ENCODE measurements at regions of chr22 and their contacts with region 1.

Region 1: GRCh38 chr22:19730655-19731360 is 7.5 kb downstream of the GP1BB start:
- DNase-seq: peak; percentile 98 to 99 (median 98)
- ATAC-seq: peak; percentile 91
- H3K4me3 ChIP-seq: peak overlapping the region; percentile 45
- H3K27ac ChIP-seq: peak overlapping the region; percentile 6; the same call in 2 of the 3 replicates
- H3K4me1 ChIP-seq: peaks cover 11 to 63% of the 10 kb centered on the region in 2 experiments
- H3K27me3 ChIP-seq: peaks cover 0 to 21% of the 10 kb centered on the region in 2 experiments; a peak in 3 of 5 replicates
- CTCF ChIP-seq: peak; percentile 99 to 100 (median 100)
- EP300 ChIP-seq: peak; percentile 78
- POLR2A ChIP-seq: no peak; the same call in 1 of the 2 replicates
- RAD21 ChIP-seq: peak; percentile 100

Region 2: DNA sequence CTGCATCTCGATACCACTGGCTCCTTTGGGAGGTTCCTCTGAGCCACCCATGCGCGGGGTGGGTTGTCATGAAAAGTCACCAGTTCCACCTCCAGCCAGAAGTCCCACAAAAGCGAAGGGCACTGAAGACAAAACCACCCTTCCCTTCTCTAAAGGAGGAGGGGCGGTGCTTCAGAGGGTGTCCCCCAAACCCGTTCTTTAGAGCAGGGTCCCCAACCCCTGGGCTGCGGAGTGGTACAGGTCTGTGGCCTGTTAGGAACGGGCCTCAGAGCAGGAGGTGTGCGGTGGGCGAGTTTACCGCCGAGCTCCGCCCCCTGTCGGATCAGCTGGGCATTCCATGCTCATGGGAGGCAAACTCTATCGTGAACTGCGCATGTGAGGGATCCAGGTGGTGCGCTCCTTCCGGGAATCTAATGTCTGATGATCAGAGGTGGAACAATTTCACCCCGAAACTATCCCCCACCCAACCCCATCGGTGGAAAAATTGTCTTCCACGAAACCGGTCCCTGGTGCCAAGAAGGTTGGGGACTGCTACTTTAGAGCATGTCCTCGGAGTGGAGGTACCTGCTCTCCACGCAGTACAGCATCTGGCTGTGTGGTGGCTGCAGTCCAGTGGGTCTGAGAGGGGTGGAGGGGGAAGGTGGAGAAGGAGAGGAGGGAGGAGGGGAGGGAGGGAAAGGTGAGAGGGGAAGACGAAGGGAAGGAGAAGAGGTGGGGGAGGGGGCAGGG is 89.4 kb before region 1 on chr22:
- CTCF ChIA-PET with region 1: no interaction called
- POLR2A ChIA-PET with region 1: no interaction called
- in situ Hi-C with region 1: no loop called
- intact Hi-C with region 1: no loop called
- DNase-seq: peak; percentile 92 to 94 (median 92)
- ATAC-seq: peak; percentile 92
- H3K4me3 ChIP-seq: no peak overlapping the region
- H3K27ac ChIP-seq: no peak overlapping the region
- H3K4me1 ChIP-seq: peaks cover 37 to 42% of the 10 kb centered on the region in 2 experiments; a peak in 4 of 5 replicates
- H3K27me3 ChIP-seq: peaks cover 0 to 10% of the 10 kb centered on the region in 2 experiments; a peak in 1 of 5 replicates
- CTCF ChIP-seq: peak; percentile 95 to 99 (median 95)
- EP300 ChIP-seq: peak; percentile 54; the same call in 1 of the 2 replicates
- POLR2A ChIP-seq: no peak
- RAD21 ChIP-seq: peak in 1 of 2 experiments; percentile 77; a peak in 3 of 4 replicates

Region 3: DNA sequence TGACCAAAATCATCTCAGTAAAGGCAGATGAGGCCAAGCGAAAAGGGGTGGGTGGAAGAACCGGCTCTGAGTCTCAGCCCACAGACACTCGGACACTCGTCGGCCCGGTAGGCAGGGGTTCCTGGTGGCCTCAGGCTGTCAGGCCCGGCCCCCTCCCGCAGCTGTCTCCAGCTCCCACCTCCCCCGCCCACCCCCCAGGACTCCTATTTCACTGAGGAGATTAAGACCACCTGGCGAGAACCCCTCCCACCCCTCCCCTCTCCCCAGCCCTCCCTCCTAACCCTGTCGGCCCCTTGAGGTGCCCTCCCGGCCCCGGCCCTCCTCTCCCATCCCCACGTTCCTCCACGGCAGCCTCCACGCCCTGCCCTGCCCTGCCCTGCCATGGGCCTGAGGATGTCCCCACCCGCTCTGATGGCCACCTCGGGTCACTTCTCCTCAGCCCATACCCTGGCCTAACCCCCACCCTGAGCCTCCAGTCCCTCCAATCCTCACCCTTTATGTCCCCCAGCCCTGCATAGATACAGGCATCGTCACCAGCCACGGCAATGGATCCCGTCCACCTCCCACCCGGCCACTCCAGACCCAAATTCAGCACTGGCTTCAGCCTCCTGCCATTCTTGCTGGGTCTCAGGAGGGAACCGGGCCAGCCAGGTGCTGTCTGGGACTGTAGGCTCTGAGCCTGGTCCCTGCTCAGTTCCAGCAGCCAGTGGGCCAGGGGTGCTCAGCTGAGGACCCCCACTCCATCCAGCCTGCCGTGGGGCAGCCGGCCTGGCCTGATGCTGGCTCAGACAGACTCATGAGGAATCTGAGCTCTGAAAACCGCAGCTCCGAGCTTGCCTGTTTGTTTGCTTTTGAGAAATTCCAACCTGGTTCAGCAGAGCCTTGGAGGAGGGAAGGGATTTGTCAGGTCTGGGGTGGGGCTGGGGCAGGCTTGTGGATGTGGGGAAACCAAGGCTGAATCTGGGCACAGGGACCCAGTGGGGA is 20.0 kb after region 1 on chr22:
- CTCF ChIA-PET with region 1: interaction called, 10 read pairs
- POLR2A ChIA-PET with region 1: interaction called, 15 read pairs
- in situ Hi-C with region 1: no loop called
- intact Hi-C with region 1: no loop called
- DNase-seq: no peak
- ATAC-seq: no peak
- H3K4me3 ChIP-seq: no peak overlapping the region
- H3K27ac ChIP-seq: no peak overlapping the region
- H3K4me1 ChIP-seq: peaks cover 5 to 70% of the 10 kb centered on the region in 2 experiments
- H3K27me3 ChIP-seq: peaks cover 56 to 82% of the 10 kb centered on the region in 2 experiments; a peak in 4 of 5 replicates
- CTCF ChIP-seq: no peak
- EP300 ChIP-seq: no peak
- POLR2A ChIP-seq: no peak
- RAD21 ChIP-seq: no peak

Region 4: DNA sequence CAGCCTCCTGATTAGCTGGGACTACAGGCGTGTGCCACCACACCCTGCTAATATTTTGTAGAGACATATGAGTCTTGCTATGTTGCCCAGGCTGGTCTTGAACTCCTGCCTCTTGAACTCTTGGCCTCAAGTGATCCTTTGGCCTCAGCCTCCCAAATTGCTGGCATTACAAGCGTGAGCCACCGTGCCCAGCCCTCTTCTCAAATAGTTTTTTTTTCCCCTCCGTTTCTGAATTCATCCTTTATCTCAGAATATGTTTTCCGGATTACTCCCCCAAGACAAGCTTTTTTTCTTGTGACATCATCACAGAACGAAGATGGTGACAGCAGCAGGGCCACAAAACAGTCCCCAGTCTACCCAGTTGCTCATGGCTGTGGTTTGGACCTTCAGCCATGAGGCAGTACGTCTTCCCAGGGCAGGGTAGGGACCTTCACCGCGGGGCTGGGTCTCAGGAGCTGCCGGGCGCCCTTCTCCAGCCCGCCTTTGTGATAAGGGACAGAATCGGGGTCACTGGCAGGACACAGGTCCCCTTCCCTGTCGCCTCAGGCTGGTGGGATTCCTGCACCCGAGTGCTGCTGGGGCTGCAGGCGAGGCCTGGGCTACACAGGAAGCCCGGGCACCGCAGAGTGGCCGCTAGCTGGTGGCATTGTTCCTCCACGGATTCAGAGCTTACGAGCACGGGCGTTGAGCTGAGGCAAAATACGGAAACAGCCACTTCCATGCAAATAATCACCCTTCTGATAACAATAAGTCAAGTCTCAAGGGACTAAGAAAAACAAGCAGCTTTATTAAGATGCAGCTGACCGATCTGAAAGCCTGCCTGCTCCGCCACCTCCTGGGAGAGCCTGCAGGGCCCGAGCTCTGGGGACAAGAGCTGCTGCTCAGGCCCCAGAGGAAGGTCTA is 41.9 kb after region 1 on chr22:
- CTCF ChIA-PET with region 1: interaction called, 3 read pairs
- POLR2A ChIA-PET with region 1: interaction called, 10 read pairs
- in situ Hi-C with region 1: no loop called
- intact Hi-C with region 1: loop called (anchors 2 kb)
- DNase-seq: peak; percentile 65 to 73 (median 69)
- ATAC-seq: peak; percentile 54
- H3K4me3 ChIP-seq: no peak overlapping the region
- H3K27ac ChIP-seq: peak overlapping the region; percentile 11; the same call in 1 of the 3 replicates
- H3K4me1 ChIP-seq: peaks cover 38 to 77% of the 10 kb centered on the region in 2 experiments
- H3K27me3 ChIP-seq: peaks cover 0 to 9% of the 10 kb centered on the region in 2 experiments; a peak in 2 of 5 replicates
- CTCF ChIP-seq: peak in 2 of 3 experiments; percentile 34 to 37; a peak in 2 of 6 replicates
- EP300 ChIP-seq: no peak
- POLR2A ChIP-seq: no peak
- RAD21 ChIP-seq: peak in 1 of 2 experiments; percentile 51; a peak in 2 of 4 replicates

Region 5: DNA sequence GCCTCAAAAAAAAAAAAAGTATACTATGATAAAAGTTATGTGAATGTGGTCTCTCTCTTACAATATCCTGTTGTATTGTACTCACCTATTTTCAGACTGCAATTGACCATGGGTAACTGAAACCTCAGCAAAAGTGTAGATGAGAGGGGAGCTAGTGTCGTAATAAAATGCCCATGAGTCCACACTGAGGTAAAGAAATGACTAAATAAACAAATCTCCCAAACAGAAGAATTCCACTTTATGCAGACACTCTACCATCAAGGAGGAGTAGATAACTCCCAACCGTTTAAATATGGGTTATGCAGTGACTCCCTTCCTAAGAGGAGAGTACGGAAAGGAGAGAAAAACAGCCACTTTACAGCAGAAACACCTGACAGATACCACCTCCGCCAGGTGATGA is 109.3 kb after region 1 on chr22:
- CTCF ChIA-PET with region 1: no interaction called
- POLR2A ChIA-PET with region 1: no interaction called
- in situ Hi-C with region 1: no loop called
- intact Hi-C with region 1: no loop called
- DNase-seq: no peak
- ATAC-seq: no peak
- H3K4me3 ChIP-seq: no peak overlapping the region
- H3K27ac ChIP-seq: no peak overlapping the region
- H3K4me1 ChIP-seq: peaks cover 0 to 26% of the 10 kb centered on the region in 2 experiments; a peak in 2 of 5 replicates
- H3K27me3 ChIP-seq: no peaks in the 10 kb centered on the region
- CTCF ChIP-seq: no peak
- EP300 ChIP-seq: no peak
- POLR2A ChIP-seq: no peak
- RAD21 ChIP-seq: no peak

Region 6: DNA sequence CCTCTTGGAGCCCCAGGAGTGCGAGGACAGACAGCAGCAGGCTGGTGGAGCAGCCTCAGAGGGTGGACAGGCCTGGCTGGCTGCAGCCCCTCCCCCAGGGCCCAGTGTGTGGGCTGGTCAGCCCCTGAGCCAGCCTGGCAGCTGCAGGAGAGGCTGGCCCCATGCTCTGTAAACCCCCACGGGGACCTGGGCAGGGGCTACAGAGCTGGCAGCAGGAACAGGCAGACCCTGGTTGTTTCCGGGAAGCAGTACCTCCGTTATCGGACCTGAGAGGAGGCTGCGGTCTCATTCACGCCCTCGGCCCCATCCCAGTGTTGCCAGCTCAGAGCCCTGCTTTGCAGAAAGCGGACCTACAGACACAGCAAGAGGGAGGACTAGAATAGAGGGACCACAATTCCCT is 172.2 kb after region 1 on chr22:
- CTCF ChIA-PET with region 1: interaction called, 156 read pairs
- POLR2A ChIA-PET with region 1: interaction called, 5 read pairs
- in situ Hi-C with region 1: no loop called
- intact Hi-C with region 1: loop called (anchors 1 kb)
- DNase-seq: no peak
- ATAC-seq: peak; percentile 29
- H3K4me3 ChIP-seq: no peak overlapping the region
- H3K27ac ChIP-seq: no peak overlapping the region
- H3K4me1 ChIP-seq: peaks cover 0 to 40% of the 10 kb centered on the region in 2 experiments; a peak in 2 of 5 replicates
- H3K27me3 ChIP-seq: no peaks in the 10 kb centered on the region
- CTCF ChIP-seq: no peak
- EP300 ChIP-seq: no peak
- POLR2A ChIP-seq: no peak
- RAD21 ChIP-seq: no peak

Region 7: DNA sequence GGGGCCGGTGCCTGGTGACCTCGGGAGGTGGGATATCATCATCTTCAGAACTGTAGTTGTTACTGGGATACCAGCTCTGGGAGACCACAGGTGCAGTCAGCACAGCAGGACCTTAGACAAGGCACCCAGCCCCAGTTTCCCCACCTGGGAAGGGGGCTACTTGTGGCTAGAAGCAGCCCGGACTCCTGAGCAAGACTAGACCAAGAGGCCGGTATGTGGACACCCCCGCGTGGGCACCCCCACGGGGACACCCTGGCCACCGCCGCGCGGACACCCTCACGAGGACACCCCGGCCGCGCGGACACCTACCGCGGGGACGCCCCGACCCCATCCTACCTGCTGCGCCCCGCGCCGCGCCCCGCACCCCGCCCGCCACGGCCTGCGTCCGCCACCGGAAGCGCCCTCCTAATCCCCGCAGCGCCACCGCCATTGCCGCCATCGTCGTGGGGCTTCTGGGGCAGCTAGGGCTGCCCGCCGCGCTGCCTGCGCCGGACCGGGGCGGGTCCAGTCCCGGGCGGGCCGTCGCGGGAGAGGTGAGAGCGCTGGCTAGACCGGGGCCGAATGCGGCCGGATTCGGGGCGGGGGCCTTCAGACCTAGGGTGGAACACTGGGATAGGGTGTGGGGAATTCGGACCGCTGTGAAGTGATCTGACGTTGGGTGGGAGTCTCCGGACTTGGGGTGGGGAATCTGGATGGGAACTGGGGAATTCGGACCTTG is 210.7 kb after region 1 on chr22 and contains the starts of genes COMT and TXNRD2:
- CTCF ChIA-PET with region 1: interaction called, 3 read pairs
- POLR2A ChIA-PET with region 1: interaction called, 8 read pairs
- in situ Hi-C with region 1: no loop called
- intact Hi-C with region 1: loop called (anchors 2 kb)
- DNase-seq: peak; percentile 96 to 100 (median 100)
- ATAC-seq: peak; percentile 88
- H3K4me3 ChIP-seq: peak within 1 kb of the TSS; percentile 58
- H3K27ac ChIP-seq: peak within 1 kb of the TSS; percentile 88
- H3K4me1 ChIP-seq: peaks cover 35 to 37% of the 10 kb centered on the region in 2 experiments
- H3K27me3 ChIP-seq: no peaks in the 10 kb centered on the region; a peak in 1 of 5 replicates
- CTCF ChIP-seq: peak in 1 of 3 experiments; percentile 34; a peak in 3 of 6 replicates
- EP300 ChIP-seq: peak; percentile 21; the same call in 1 of the 2 replicates
- POLR2A ChIP-seq: no peak
- RAD21 ChIP-seq: no peak
- polyA plus RNA-seq, gene COMT: 12.5 to 39.6 TPM
- polyA plus RNA-seq, gene TXNRD2: 3.3 to 4.4 TPM

Region 8: DNA sequence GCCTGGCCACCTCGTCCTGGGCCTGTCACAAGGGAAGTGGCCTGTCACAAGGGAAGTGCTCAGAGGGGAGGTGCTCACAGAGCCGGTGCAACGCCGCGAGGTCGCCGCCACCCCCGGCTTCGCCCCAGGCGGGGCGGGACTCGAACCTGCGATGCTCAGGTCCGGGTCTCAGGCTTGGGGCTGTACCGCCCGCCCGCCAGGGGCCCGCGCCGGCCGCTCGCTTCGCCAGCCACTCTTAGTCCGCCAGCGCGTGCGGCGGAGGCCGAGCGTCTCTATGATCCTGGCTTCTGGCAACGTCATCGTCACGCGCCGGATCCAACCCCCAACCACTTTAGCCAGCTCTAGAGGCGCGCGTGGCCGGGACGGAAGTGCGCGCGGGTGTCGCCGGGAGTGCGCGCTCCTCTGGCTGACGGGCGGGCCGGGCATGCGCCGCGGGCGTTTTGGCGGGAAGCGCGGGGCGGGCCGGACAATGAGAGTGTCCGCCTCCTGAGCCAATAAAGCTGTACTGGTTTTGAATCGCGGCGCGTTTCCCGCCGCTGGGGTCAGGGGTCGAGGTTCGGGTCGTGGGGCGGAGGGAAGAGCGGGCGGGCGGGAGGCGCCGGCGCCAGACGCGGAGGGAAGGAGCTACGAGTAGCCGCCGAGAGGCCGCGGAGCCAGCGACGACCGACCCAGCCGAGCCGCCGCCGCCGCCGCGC is 386.3 kb after region 1 on chr22 and contains the start of gene TRMT2A:
- CTCF ChIA-PET with region 1: no interaction called
- POLR2A ChIA-PET with region 1: no interaction called
- in situ Hi-C with region 1: loop called (anchors 10 kb)
- intact Hi-C with region 1: loop called (anchors 5 kb)
- DNase-seq: peak; percentile 100
- ATAC-seq: peak; percentile 88
- H3K4me3 ChIP-seq: peak within 1 kb of the TSS; percentile 63
- H3K27ac ChIP-seq: peak within 1 kb of the TSS; percentile 94
- H3K4me1 ChIP-seq: peaks cover 25 to 90% of the 10 kb centered on the region in 2 experiments
- H3K27me3 ChIP-seq: no peaks in the 10 kb centered on the region
- CTCF ChIP-seq: peak; percentile 56 to 62 (median 57); a peak in 4 of 6 replicates
- EP300 ChIP-seq: peak; percentile 89
- POLR2A ChIP-seq: peak; percentile 90
- RAD21 ChIP-seq: peak in 1 of 2 experiments; percentile 49; a peak in 2 of 4 replicates
- polyA plus RNA-seq, gene TRMT2A: 1.6 to 6.6 TPM